Heart right ventricle (tissue), 16 donors: ENCODE measurements at regions of chr14 and their contacts with region 1.

Region 1: DNA sequence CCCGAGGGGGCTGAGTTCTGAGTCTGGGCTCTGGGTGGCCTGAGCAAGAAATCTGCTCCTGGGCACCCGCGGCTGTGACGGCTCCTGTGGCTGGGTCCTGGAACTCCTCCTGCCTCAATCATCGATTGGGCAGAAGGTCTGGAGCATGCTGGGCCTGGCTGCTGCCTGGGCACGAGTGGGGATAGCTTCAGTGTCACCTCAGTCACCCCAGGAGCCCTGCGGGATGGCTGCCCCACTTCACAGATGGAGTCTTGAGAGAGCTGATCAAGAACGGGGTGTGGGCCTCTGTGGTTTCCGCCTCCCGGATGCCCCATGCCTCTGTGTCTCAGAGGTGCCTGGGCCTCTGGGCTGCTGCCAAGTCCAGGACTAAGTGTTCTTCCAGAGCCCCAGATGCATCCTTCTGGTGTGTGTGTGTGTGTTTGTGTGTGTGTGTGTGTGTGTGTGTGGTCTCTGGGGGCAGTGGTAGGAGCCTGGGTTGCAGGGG is 185.6 kb upstream of the C14orf180 start:
- DNase-seq: peak; percentile 78 to 84
- ATAC-seq: peak; percentile 70 to 96 (median 90)
- H3K4me3 ChIP-seq: no peak overlapping the region
- H3K27ac ChIP-seq: peak overlapping the region; percentile 55 to 89 (median 82)
- H3K4me1 ChIP-seq: peaks cover 13 to 54% (median 32%) of the 10 kb centered on the region in 9 donors
- H3K27me3 ChIP-seq: peaks cover 0 to 5% (median 0%) of the 10 kb centered on the region in 7 donors
- CTCF ChIP-seq: no peak

Region 2: DNA sequence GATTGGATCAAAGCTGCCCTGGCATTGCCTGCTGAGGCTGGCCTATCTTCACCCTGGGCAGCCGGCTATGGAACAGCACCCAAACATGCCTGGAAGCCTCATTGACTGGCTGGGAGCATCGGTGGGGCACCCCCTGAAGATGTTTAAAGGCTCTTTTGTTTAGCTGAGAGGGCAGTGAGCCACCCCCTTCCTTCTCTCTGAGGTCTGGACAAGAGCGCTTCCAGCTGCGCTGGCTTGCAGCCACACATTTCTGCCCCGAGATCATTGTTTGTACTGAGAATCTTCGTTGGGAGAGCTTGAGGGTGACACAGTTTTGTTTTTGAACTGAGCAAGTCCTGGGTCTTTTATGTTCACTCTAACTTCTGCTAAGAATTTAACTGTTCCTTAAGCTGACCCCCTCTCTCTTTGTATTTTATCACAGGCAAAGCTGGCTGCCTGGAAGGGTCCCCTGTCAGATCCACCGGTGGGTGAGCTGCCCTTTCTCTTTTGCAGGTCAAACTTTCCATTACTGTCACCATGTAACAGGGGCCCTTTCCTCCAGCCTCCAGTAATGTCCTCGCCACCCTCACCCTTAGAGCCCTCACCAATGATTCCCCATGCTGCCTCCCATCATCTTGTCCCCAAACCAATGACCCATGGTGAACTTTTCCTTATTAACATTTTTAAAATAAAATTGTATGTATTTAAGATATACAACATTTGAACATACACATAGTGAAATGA is 43.3 kb before region 1 on chr14:
- intact Hi-C with region 1: loop called in 1 of 10 experiments (anchors 5 kb)
- DNase-seq: no peak
- ATAC-seq: peak in 2 of 8 donors; percentile 10 to 28
- H3K4me3 ChIP-seq: no peak overlapping the region
- H3K27ac ChIP-seq: peak overlapping the region in 1 of 10 donors; percentile 22
- H3K4me1 ChIP-seq: peaks cover 3 to 26% (median 7%) of the 10 kb centered on the region in 9 donors
- H3K27me3 ChIP-seq: peaks cover 0 to 13% (median 3%) of the 10 kb centered on the region in 7 donors
- CTCF ChIP-seq: no peak

Region 3: DNA sequence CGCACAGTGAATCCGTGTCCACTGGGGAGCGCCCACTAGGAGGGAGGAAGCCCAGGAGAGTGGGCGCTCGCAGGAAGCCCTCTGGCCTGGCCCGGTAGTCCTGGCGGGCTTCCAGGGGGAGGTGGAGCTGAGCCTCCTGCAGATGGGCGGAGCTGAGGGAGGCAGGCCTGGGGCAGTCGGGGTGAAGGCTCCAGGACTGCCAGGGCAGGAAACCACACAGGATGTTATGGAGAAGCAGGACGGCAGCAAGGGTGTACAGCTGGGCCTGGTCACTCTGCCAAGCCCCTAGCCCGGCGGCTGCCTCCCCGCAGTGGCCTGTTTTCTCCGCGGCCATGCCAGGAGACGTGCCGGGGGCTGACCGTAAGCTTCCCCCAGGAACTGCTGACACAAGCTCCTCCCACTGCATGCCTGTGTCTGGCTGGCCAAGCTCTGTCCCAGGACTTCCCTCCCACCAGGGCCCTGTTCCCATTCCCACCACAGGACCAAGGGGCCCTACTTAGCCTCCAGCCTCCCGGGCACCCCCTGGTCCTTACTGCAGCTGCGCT is 42.2 kb after region 1 on chr14:
- intact Hi-C with region 1: loop called in 1 of 10 experiments (anchors 2 kb)
- DNase-seq: peak; percentile 82 to 86
- ATAC-seq: peak; percentile 80 to 93 (median 88)
- H3K4me3 ChIP-seq: peak overlapping the region in 9 of 10 donors; percentile 16 to 46 (median 39)
- H3K27ac ChIP-seq: peak overlapping the region in 9 of 10 donors; percentile 41 to 87 (median 75)
- H3K4me1 ChIP-seq: peaks cover 7 to 26% (median 17%) of the 10 kb centered on the region in 9 donors
- H3K27me3 ChIP-seq: no peaks in the 10 kb centered on the region
- CTCF ChIP-seq: peak in 3 of 9 donors; percentile 9 to 12 (median 10)

Region 4: DNA sequence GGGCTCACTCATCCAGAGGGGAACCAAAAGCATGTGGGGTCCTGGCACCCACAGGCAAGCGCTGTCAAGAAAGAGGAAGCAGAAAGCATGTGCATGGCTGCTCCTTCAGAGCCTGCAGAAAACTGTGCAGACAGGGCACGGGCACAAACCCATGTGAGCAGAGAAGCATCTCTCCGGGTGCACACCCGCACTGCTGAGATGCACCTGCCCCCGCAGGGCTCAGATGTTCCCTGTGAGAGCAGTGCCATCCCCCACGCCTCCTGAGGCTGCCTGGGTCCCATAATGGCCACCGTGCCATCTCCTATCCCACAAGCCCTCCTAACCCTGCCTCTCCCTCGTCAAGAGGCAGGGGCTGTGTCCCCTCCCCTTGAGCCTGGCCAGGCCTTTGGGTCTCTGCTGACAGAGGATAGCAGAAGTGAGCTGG is 263.2 kb after region 1 on chr14:
- intact Hi-C with region 1: no loop called
- DNase-seq: no peak
- ATAC-seq: peak in 1 of 8 donors; percentile 7
- H3K4me3 ChIP-seq: no peak overlapping the region
- H3K27ac ChIP-seq: no peak overlapping the region
- H3K4me1 ChIP-seq: peaks cover 2 to 37% (median 18%) of the 10 kb centered on the region in 9 donors
- H3K27me3 ChIP-seq: peaks cover 0 to 23% (median 0%) of the 10 kb centered on the region in 7 donors
- CTCF ChIP-seq: no peak